Activated CD4-positive, alpha-beta T cell treated with anti-CD3 and anti-CD28 coated beads for 36 hours (primary cell): ENCODE measurements at regions of chr7 and their contacts with region 1.

Region 1: DNA sequence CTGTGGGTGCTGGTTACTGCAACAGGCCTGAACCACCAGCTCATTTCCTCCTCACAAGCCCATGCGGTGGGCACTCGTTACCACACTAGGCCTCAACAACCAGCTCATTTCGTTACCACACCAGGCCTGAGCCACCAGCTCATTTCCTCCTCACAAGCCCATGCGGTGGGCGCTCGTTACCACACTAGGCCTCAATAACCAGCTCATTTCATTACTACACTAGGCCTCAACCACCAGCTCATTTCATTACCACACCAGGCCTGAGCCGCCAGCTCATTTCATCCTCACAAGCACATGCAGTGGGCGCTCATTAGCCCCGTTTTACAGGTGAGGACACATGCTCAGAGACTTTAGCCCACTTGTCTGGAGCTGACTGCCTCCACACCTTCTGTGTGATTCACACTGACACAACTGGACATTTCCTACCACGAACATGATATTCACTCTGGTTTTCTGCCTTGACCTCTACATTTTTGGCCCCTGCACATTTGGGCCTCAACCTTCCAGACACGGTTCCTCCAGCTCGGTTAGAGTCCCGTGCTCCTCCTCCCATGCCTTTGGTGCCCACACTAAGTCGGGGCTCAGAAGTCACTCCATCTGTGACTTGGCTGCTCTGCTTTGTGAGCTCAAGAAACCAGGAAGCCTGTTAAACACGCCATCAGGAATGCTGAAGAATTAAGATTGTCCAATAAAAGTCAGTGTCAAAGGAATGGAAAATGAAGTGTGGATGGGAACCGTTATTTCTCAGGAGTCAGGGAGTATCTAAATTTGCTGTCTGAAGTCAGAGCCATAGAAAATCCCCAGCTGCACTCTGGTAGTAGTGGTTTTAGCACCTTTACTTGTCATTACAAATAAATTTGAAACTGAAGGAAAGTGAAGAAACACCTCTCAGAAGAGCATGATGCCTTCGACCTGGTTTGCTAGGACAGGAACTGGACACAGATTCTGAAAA is 55.8 kb upstream of the LANCL2 start:
- DNase-seq: peak; percentile 91
- ATAC-seq: peak; percentile 88
- H3K4me3 Mint-ChIP-seq: no peak overlapping the region
- H3K27ac Mint-ChIP-seq: peak overlapping the region; percentile 84
- H3K4me1 Mint-ChIP-seq: peaks cover 22% of the 10 kb centered on the region
- H3K27me3 Mint-ChIP-seq: peaks cover 12% of the 10 kb centered on the region

Region 2: DNA sequence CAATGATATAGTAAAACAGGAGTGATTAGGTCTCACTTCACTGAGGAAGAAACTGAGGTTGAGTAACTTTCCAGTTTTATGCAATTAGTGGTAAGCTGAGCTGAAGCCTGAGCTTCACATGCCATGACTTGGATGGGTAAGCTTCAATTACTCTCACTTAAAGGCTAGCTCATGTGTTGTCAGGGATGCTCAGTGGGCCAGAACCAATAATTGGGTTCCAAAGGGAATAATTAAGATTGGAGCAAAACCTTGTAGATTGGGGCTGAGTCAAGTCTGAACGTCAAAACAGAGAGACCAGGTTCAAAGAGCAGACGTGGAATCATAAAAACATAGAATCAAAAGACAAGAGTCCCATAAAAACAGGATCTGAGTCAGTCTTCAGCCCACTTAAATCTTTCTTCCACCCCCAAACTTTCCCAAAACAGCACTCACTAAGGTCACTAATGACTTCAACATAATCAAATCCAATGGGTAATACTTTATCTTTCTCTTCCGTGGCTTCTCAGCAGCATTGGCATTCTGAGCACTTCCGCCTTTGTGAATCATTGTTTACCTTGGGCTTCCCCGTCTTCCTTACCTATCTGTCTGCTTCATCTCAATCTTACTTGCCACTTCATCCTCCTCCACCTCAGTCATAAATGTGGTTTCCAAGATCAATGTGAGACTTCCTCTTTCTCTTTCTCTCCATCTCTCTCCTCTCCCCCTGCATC is 313.5 kb before region 1 on chr7:
- CTCF ChIA-PET with region 1: no interaction called
- POLR2A ChIA-PET with region 1: interaction called, 3 read pairs
- intact Hi-C with region 1: loop called in 1 of 2 experiments (anchors 1 kb)
- DNase-seq: peak; percentile 58
- ATAC-seq: peak; percentile 90
- H3K4me3 Mint-ChIP-seq: no peak overlapping the region
- H3K27ac Mint-ChIP-seq: peak overlapping the region; percentile 69
- H3K4me1 Mint-ChIP-seq: peaks cover 34% of the 10 kb centered on the region
- H3K27me3 Mint-ChIP-seq: peaks cover 22% of the 10 kb centered on the region

Region 3: DNA sequence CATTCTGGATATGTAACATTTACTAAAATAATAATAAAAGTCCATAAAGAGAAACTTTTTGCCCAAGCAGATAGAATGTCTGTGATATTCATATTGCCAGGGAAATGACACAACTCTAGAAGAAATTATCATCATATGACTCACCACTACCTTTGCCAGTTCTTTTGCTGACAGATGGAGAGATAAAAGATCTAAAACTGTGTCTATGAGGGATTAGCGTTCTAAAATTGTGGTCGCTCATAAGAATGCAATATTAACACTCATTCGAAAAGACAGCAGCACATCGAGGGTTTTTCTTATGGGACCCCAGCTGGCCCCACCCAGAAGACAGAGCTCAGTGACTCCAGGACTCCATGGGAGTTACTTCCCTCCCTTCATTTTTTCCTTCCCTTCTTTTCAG is 39.2 kb after region 1 on chr7:
- CTCF ChIA-PET with region 1: interaction called, 3 read pairs
- POLR2A ChIA-PET with region 1: no interaction called
- intact Hi-C with region 1: loop called (anchors 1 to 5 kb)
- DNase-seq: no peak
- ATAC-seq: peak; percentile 70
- H3K4me3 Mint-ChIP-seq: no peak overlapping the region
- H3K27ac Mint-ChIP-seq: no peak overlapping the region
- H3K4me1 Mint-ChIP-seq: peaks cover 10% of the 10 kb centered on the region
- H3K27me3 Mint-ChIP-seq: peaks cover 20% of the 10 kb centered on the region

Region 4: GRCh38 chr7:55509322-55509721 is 200.0 kb after region 1 on chr7:
- CTCF ChIA-PET with region 1: interaction called, 3 read pairs
- POLR2A ChIA-PET with region 1: interaction called, 3 read pairs
- intact Hi-C with region 1: loop called in 1 of 2 experiments (anchors 1 kb)
- DNase-seq: no peak
- ATAC-seq: no peak
- H3K4me3 Mint-ChIP-seq: no peak overlapping the region
- H3K27ac Mint-ChIP-seq: peak overlapping the region; percentile 40
- H3K4me1 Mint-ChIP-seq: peaks cover 75% of the 10 kb centered on the region
- H3K27me3 Mint-ChIP-seq: no peaks in the 10 kb centered on the region

Region 5: GRCh38 chr7:55515569-55516279 is 206.4 kb after region 1 on chr7:
- CTCF ChIA-PET with region 1: no interaction called
- POLR2A ChIA-PET with region 1: interaction called, 3 read pairs
- intact Hi-C with region 1: loop called in 1 of 2 experiments (anchors 1 kb)
- DNase-seq: peak; percentile 50
- ATAC-seq: peak; percentile 25
- H3K4me3 Mint-ChIP-seq: peak overlapping the region; percentile 2
- H3K27ac Mint-ChIP-seq: peak overlapping the region; percentile 69
- H3K4me1 Mint-ChIP-seq: peaks cover 66% of the 10 kb centered on the region
- H3K27me3 Mint-ChIP-seq: no peaks in the 10 kb centered on the region